ENCODE measurements at regions of chr11 and their contacts with region 1.

Region 1: GRCh38 chr11:60040109-60040508 is at the start of gene OOSP2:
- DNase-seq: no peak
- ATAC-seq: no peak
- H3K4me3 ChIP-seq: no peak within 1 kb of the TSS
- H3K27ac ChIP-seq: no peak within 1 kb of the TSS
- H3K4me1 ChIP-seq: no peaks in the 10 kb centered on the region
- H3K27me3 ChIP-seq: peaks cover 3% of the 10 kb centered on the region; the same call in 1 of the 2 replicates
- CTCF ChIP-seq: no peak
- total RNA-seq, gene OOSP2: not detected

Region 2: DNA sequence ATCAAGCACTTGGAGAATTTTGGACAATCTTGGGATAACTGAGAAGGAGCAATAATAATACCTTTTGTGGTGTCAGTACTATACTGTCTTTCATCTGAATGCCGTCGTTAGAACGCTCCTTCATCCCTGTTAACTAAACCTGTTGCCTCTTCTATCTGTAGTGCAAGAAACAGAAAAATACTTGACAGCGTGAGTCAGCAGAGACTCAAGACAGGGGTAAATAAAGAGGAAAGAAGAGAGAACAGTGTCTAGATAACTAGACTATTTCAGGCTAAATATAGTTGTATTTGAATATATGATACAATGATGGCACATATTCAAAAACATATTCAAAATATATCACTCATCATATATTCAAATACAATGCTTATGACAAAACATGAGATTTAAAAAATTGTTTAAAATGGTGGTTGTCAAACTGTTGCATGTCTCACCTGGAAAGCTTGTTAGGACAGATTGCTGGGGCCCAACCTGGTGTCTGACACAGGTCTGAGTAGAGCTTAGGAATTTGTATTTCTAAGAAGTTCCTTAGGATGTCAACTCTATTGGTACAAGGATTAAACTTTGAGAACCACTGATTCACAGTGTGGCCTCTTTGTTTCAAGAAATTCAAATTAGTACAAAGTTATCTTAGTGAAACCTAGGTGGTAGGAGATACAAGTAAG is 58.9 kb before region 1 on chr11:
- CTCF ChIA-PET with region 1: no interaction called
- POLR2A ChIA-PET with region 1: interaction called, 17 read pairs
- in situ Hi-C with region 1: no loop called
- intact Hi-C with region 1: no loop called
- DNase-seq: no peak
- ATAC-seq: no peak
- H3K4me3 ChIP-seq: no peak overlapping the region
- H3K27ac ChIP-seq: no peak overlapping the region
- H3K4me1 ChIP-seq: no peaks in the 10 kb centered on the region
- H3K27me3 ChIP-seq: no peaks in the 10 kb centered on the region; the same call in 1 of the 2 replicates
- CTCF ChIP-seq: no peak

Region 3: GRCh38 chr11:60130496-60130895 is 90.4 kb after region 1 on chr11:
- CTCF ChIA-PET with region 1: no interaction called
- POLR2A ChIA-PET with region 1: no interaction called
- in situ Hi-C with region 1: no loop called
- intact Hi-C with region 1: loop called (anchors 5 kb)
- DNase-seq: no peak
- ATAC-seq: peak; percentile 83; the same call in 1 of the 2 replicates
- H3K4me3 ChIP-seq: no peak overlapping the region
- H3K27ac ChIP-seq: no peak overlapping the region
- H3K4me1 ChIP-seq: no peaks in the 10 kb centered on the region
- H3K27me3 ChIP-seq: no peaks in the 10 kb centered on the region
- CTCF ChIP-seq: peak; percentile 59

Region 4: GRCh38 chr11:60184824-60185511 is 144.9 kb after region 1 on chr11:
- CTCF ChIA-PET with region 1: interaction called, 13 read pairs
- POLR2A ChIA-PET with region 1: no interaction called
- in situ Hi-C with region 1: no loop called
- intact Hi-C with region 1: no loop called
- DNase-seq: no peak
- ATAC-seq: no peak
- H3K4me3 ChIP-seq: no peak overlapping the region
- H3K27ac ChIP-seq: no peak overlapping the region
- H3K4me1 ChIP-seq: no peaks in the 10 kb centered on the region
- H3K27me3 ChIP-seq: no peaks in the 10 kb centered on the region
- CTCF ChIP-seq: no peak

Region 5: DNA sequence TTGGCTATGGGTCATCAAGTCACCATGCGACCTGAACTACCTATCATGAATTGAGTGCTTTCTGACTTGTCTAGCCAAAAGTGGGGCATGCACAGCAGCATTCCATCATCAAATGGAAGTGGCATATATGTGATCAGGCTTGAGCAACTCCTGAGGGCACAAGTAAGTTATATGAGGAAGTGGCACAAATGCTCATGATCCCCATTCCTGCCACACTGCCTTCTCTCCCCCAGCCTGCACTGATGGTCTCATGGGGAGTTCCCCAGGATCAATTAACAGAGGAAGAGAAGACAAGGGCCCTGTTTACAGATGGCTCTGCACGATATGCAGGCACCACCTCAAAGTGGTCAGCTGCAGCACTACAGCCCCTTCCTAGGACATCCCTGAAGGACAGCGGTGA is 181.1 kb after region 1 on chr11:
- CTCF ChIA-PET with region 1: no interaction called
- POLR2A ChIA-PET with region 1: no interaction called
- in situ Hi-C with region 1: no loop called
- intact Hi-C with region 1: no loop called
- DNase-seq: no peak
- ATAC-seq: no peak
- H3K4me3 ChIP-seq: no peak overlapping the region
- H3K27ac ChIP-seq: no peak overlapping the region
- H3K4me1 ChIP-seq: no peaks in the 10 kb centered on the region; the same call in 1 of the 2 replicates
- H3K27me3 ChIP-seq: no peaks in the 10 kb centered on the region
- CTCF ChIP-seq: no peak

Measured in Panc1 (cell line).